Vagina (tissue), 2 donors: ENCODE measurements at regions of chr12 and their contacts with region 1.

Region 1: GRCh38 chr12:21683115-21683514 is 25.5 kb upstream of the LDHB start:
- DNase-seq: no peak
- H3K4me3 ChIP-seq: no peak overlapping the region
- H3K27ac ChIP-seq: no peak overlapping the region
- H3K4me1 ChIP-seq: no peaks in the 10 kb centered on the region
- H3K27me3 ChIP-seq: no peaks in the 10 kb centered on the region
- CTCF ChIP-seq: no peak
- POLR2A ChIP-seq: no peak

Region 2: GRCh38 chr12:21350975-21351374 is 332.1 kb before region 1 on chr12:
- intact Hi-C with region 1: no loop called
- DNase-seq: no peak
- H3K4me3 ChIP-seq: no peak overlapping the region
- H3K27ac ChIP-seq: no peak overlapping the region
- H3K4me1 ChIP-seq: no peaks in the 10 kb centered on the region
- H3K27me3 ChIP-seq: no peaks in the 10 kb centered on the region
- CTCF ChIP-seq: no peak
- POLR2A ChIP-seq: no peak

Region 3: DNA sequence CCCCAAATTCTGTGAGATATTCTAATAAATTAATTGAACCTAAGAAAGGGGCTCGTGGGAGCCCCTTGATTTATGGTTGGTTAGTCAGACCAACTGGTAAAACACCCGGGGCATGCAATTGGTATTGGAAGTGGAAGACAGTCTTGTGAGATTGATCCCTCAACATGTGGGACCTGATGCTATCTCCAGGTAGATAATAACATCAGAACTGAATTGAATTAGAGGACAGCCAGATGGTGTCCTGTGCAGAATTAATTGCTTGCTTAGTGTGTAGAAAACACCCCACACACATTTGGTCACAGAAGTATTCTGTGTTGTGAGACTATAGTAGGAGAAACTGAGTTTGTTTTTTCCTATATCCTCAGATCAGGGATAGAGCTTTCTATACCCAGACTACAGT is 223.6 kb before region 1 on chr12:
- intact Hi-C with region 1: no loop called
- DNase-seq: no peak
- H3K4me3 ChIP-seq: no peak overlapping the region
- H3K27ac ChIP-seq: no peak overlapping the region
- H3K4me1 ChIP-seq: no peaks in the 10 kb centered on the region
- H3K27me3 ChIP-seq: no peaks in the 10 kb centered on the region
- CTCF ChIP-seq: no peak
- POLR2A ChIP-seq: no peak

Region 4: GRCh38 chr12:21583587-21583986 is 99.5 kb before region 1 on chr12:
- intact Hi-C with region 1: no loop called
- DNase-seq: no peak
- H3K4me3 ChIP-seq: no peak overlapping the region
- H3K27ac ChIP-seq: no peak overlapping the region
- H3K4me1 ChIP-seq: no peaks in the 10 kb centered on the region
- H3K27me3 ChIP-seq: no peaks in the 10 kb centered on the region
- CTCF ChIP-seq: no peak
- POLR2A ChIP-seq: no peak

Region 5: GRCh38 chr12:21607701-21608100 is 75.4 kb before region 1 on chr12:
- intact Hi-C with region 1: loop called (anchors 10 kb)
- DNase-seq: no peak
- H3K4me3 ChIP-seq: no peak overlapping the region
- H3K27ac ChIP-seq: no peak overlapping the region
- H3K4me1 ChIP-seq: no peaks in the 10 kb centered on the region
- H3K27me3 ChIP-seq: no peaks in the 10 kb centered on the region
- CTCF ChIP-seq: no peak
- POLR2A ChIP-seq: no peak

Region 6: DNA sequence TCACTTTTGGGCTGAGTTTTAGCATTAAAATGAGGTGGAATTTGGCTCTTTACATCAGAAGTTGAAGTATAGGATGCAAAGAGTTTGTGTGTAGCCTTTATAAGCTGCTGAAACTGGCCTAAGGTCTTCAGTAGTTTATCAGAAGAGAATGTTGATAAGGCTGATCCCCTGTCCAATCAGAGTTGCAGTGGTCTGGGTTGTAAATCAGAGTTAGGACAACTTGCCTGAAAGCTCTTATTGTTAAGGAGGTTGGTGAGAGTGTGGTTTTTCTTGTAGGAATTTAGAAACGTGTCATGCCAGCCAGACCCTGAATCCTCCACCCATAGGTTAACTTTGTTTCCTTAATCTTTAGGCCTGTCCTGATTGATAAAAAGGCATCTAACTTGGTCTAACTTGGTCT is 507.9 kb after region 1 on chr12:
- intact Hi-C with region 1: no loop called
- DNase-seq: no peak
- H3K4me3 ChIP-seq: no peak overlapping the region
- H3K27ac ChIP-seq: no peak overlapping the region
- H3K4me1 ChIP-seq: no peaks in the 10 kb centered on the region
- H3K27me3 ChIP-seq: no peaks in the 10 kb centered on the region
- CTCF ChIP-seq: no peak
- POLR2A ChIP-seq: no peak